Psoas muscle (tissue), 8 donors: ENCODE measurements at regions of chr18 and their contacts with region 1.

Region 1: DNA sequence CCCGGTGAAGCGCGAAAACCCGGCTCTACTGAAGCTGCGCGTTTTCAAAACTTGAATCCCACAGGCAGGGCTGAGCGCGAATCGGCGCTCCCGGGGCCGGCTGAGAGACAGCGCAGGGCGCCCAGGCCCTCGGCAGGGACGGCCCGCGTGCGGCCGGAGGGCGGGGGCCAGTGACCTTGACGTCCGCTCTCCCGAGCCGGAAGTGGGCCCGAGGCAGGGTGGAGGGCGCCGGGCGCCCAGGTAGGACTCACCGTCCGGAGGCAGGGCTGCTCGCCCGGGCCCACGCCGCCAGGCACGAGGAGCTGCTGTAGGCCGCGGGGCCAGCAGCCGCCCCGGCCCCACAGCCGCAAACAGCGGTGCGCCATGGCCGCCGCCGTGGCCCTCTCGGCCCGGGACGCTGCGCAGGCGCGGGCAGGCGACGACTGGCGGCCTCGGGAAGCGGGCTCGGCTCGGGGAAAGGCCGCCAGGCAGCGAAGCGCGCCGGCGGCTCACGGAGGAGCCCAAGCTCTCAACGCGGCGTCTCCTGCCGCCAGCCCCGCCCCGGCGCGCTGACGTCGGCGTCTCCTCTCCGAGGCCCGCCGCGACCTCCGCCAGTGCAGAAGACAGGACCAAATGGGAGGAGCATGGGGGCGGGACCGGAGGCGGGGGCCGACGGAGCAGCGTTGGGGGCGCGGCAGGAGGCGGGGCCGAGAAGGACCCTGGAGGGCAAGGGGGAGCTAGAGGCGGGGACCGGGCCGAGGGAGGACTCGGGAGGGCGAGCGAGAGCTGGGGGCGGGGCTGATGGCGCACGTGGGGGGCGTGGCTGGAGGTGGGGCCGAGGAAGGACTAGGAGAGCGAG is at the start of gene AFG3L2:
- DNase-seq: peak; percentile 100
- ATAC-seq: peak; percentile 90 to 93 (median 92)
- H3K4me3 ChIP-seq: peak within 1 kb of the TSS; percentile 85
- H3K27ac ChIP-seq: peak within 1 kb of the TSS; percentile 99
- H3K4me1 ChIP-seq: peaks cover 42% of the 10 kb centered on the region
- H3K27me3 ChIP-seq: no peaks in the 10 kb centered on the region
- CTCF ChIP-seq: no peak
- total RNA-seq, gene AFG3L2: 88.8 to 163 (median 103) TPM

Region 2: DNA sequence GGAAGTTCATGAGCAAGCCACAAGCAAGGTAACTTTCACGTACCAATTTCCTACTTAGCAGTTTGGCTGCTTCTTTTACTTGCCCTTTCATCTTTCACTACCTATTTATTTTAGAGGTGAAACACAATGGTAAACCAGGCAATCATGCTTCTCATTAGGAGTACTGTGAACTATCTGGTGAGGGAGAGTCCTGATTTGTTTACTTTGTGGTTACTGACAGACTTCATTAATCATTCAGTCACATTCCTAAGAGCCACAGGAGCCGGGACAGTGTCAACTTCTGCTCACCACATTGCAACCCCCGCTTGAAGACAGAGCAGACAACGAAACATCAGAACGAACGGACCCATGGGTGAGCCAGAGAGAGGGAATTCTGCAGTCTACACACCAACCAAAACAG is 40.1 kb before region 1 on chr18:
- intact Hi-C with region 1: loop called in 1 of 2 experiments (anchors 5 kb)
- DNase-seq: no peak
- ATAC-seq: peak; percentile 13 to 75 (median 73)
- H3K4me3 ChIP-seq: no peak overlapping the region
- H3K27ac ChIP-seq: peak overlapping the region; percentile 32
- H3K4me1 ChIP-seq: peaks cover 36% of the 10 kb centered on the region
- H3K27me3 ChIP-seq: no peaks in the 10 kb centered on the region
- CTCF ChIP-seq: no peak

Region 3: GRCh38 chr18:12345491-12346239 is 31.3 kb before region 1 on chr18:
- intact Hi-C with region 1: loop called in 1 of 2 experiments (anchors 2 kb)
- DNase-seq: no peak
- ATAC-seq: peak in 2 of 4 donors; percentile 14 to 49
- H3K4me3 ChIP-seq: no peak overlapping the region
- H3K27ac ChIP-seq: no peak overlapping the region
- H3K4me1 ChIP-seq: no peaks in the 10 kb centered on the region
- H3K27me3 ChIP-seq: no peaks in the 10 kb centered on the region
- CTCF ChIP-seq: no peak

Region 4: GRCh38 chr18:12679183-12679786 is 302.3 kb after region 1 on chr18:
- intact Hi-C with region 1: no loop called
- DNase-seq: peak; percentile 53 to 70
- ATAC-seq: peak in 3 of 4 donors; percentile 57 to 64 (median 62)
- H3K4me3 ChIP-seq: peak overlapping the region; percentile 41
- H3K27ac ChIP-seq: peak overlapping the region; percentile 65
- H3K4me1 ChIP-seq: no peaks in the 10 kb centered on the region
- H3K27me3 ChIP-seq: no peaks in the 10 kb centered on the region
- CTCF ChIP-seq: no peak